ENCODE measurements at regions of chr1 and their contacts with region 1.

Region 1: DNA sequence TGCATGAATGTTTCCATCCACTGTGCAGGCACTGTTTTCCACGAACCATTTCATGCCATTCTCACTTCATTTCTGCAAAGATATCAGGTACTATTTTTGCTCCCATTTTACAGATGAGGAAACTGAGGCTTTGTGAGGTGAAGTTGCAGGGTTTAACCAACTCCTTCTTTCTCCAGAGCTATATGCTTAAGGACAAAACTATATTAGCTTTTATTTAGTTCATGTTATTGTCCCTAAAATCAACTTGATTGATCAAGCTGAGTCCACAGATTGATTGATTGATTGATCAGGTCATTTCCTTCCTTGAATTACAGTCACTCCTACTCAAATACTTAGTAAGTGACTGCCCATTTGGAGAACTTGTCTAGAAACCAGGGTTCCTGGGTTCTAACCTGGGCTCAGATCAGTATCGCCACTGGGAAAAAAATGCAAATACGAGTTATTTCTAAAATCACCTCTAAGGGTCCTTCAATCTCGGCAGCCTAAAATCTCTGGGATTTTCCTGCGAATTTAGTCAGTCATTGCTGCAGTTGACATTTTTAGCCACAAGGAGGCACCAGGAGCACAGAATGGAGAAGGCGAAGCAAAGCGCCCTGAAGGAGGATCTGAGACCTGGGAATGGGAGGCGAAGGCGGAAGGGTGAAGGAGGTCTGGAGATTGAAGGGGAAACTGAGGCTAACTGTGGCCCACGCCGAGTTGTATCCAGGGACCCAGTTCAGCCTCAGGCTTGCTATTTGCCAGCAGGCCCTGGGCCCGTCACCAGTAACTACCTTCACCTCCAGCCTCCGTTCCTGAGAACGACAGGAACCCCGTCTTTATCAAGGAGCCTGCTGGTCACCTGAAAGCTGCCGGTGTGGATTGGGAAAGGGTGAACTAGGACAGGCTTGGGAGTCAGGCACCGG is 14.3 kb upstream of the MUL1 start:
- DNase-seq: peak in 8 of 10 donors; percentile 63 to 83 (median 71)
- H3K4me3 ChIP-seq: peak overlapping the region in 31 of 59 donors; percentile 1 to 56 (median 25)
- H3K27ac ChIP-seq: peak overlapping the region in 1 of 59 donors; percentile 51
- H3K27me3 ChIP-seq: no peaks in the 10 kb centered on the region
- CTCF ChIP-seq: peak; percentile 68 to 92 (median 85)

Region 2: DNA sequence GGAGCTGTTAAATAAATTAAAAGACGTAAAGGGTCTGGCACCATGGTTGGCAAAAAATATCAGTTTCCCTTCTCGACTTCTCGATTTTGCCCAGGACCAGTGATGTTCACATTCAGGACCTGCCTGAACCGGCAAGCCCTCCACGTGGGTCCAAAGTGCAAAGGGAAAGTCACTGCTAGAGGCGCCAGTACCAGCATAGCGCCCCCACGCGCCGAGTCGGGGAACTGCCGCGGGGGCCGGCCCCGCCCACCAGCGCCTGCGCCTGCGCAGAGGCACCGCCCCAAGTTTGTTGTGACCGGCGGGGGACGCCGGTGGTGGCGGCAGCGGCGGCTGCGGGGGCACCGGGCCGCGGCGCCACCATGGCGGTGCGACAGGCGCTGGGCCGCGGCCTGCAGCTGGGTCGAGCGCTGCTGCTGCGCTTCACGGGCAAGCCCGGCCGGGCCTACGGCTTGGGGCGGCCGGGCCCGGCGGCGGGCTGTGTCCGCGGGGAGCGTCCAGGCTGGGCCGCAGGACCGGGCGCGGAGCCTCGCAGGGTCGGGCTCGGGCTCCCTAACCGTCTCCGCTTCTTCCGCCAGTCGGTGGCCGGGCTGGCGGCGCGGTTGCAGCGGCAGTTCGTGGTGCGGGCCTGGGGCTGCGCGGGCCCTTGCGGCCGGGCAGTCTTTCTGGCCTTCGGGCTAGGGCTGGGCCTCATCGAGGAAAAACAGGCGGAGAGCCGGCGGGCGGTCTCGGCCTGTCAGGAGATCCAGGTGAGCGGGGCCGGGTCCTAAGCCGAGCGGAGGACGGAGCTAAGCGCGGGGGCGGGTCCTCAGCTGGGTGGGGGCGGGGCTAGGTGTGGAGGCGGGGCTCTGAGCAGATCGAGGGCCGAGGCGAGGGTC is 111.2 kb after region 1 on chr1 and contains the start of gene PINK1:
- intact Hi-C with region 1: loop called in 1 of 2 experiments (anchors 2 kb)
- DNase-seq: peak; percentile 59 to 91 (median 77)
- H3K4me3 ChIP-seq: peak within 1 kb of the TSS; percentile 68 to 100 (median 92)
- H3K27ac ChIP-seq: peak within 1 kb of the TSS; percentile 31 to 99 (median 91)
- H3K27me3 ChIP-seq: no peaks in the 10 kb centered on the region
- CTCF ChIP-seq: peak; percentile 73 to 99 (median 96)
- total RNA-seq, gene PINK1: 159 to 357 (median 261) TPM

Region 3: GRCh38 chr1:20640183-20640597 is 118.0 kb after region 1 on chr1:
- intact Hi-C with region 1: loop called in 1 of 2 experiments (anchors 5 kb)
- DNase-seq: peak in 3 of 10 donors; percentile 45 to 60 (median 47)
- H3K4me3 ChIP-seq: no peak overlapping the region
- H3K27ac ChIP-seq: no peak overlapping the region
- H3K27me3 ChIP-seq: no peaks in the 10 kb centered on the region
- CTCF ChIP-seq: peak; percentile 66 to 91 (median 82)

Region 4: DNA sequence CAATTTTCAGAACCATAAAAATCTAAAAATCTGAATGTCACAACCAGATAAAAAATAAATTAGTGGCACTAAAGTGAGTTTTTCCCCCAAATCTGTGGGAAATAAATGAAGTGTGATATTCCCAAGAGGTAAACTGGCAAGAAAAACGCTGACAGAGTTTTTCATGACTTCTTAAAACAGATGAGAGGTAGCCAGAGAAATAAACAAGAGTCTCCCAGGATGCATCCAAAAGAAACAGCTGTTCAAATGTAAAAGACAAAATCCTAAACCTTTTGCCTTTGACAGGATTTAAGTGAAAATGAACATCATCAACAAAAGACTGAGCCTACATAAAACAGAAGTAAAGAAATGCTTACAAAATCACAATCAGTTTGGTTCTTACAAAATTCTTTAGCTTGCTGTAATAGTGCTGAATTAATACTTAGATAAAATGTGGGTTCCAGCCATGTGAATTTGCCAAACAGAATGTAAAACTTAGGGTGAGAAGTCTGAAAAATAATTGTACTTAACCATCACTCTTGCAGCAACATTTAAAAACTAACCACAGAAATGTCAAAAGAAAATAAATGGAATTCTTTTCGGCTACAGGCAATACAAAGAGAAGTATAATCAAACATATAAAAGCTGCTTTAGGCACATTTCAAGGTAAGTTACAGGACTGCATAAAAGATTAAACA is 520.9 kb after region 1 on chr1:
- intact Hi-C with region 1: no loop called
- DNase-seq: no peak
- H3K4me3 ChIP-seq: no peak overlapping the region
- H3K27ac ChIP-seq: no peak overlapping the region
- H3K27me3 ChIP-seq: no peaks in the 10 kb centered on the region
- CTCF ChIP-seq: no peak

Region 5: DNA sequence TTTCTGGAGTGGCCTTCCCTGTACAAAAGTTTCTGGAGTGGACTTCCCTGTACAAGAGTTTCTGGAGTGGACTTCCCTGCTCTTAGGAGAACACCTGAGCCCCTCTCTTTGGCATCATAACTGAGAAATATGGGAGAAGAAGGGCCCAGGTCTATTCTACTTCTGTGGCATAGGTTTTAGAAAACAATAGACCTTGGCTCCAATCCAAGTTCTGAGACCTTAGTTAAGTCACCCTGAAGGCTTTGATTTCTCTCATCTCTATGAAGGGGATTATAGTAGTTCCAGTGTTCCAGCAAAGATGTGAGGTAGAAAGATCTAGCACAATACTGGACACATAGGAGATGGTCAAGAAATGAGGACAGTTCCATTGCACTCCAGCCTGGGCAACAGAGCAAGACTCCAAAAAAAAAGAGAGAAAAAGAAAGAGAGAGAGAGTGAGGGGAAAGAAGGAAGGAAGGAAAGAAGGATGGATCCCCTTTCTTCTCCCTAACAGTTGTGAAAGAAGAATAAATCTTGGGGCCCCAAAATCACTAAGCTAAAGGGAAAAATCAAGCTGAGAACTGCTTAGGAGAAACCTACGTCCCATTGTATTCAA is 667.8 kb after region 1 on chr1:
- intact Hi-C with region 1: loop called in 1 of 2 experiments (anchors 10 kb)
- DNase-seq: no peak
- H3K4me3 ChIP-seq: no peak overlapping the region
- H3K27ac ChIP-seq: no peak overlapping the region
- H3K27me3 ChIP-seq: no peaks in the 10 kb centered on the region
- CTCF ChIP-seq: no peak

Measured in dorsolateral prefrontal cortex (tissue), 120 donors.